ENCODE measurements at regions of chr4 and their contacts with region 1.

Region 1: GRCh38 chr4:89434364-89434988 is 126.9 kb upstream of the GPRIN3 start:
- DNase-seq: no peak

Region 2: GRCh38 chr4:89158884-89159503 is 275.5 kb before region 1 on chr4:
- intact Hi-C with region 1: loop called (anchors 2 kb)
- DNase-seq: no peak

Region 3: DNA sequence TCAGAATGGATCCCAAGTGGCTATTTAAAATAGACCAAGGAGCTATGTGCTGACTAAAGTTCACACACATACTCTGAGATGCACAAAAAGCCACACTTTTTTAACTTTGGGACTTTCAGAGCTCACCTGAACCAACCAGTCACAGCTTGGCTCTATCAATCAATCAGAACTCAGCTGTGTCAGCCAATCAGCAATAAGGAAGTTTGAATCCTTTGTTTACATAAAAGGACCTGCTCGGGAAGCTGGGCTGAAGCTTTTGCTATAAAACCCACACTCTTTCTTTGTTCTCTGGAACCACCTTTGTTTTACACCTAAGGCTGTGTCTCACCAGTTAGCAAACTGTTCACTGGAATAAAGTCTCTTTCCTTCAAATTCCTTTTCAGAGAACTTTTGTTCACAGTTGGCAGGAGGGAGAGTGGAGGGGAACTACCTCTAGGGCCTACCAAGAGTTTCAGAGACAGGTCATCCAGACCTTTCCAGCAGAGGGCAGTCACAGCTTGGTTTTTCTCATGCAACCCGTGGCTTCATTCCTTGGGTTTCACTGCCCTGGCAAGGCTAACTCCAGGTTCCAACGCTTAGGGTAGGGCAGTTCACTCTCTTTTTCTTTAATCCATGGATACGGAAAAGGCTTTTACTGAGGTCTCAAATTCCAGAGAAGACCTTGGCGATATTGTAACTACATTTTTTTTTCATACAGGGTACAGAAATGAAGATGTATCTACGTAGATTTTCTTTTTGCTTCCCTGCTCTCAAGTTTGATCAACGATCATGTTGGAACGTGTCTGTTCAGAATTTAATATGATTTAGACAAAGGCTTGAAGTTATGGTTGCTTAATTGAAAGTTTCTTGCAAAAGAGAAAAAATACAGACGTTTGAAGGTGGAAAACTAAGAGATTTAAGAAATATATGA is 207.6 kb before region 1 on chr4:
- intact Hi-C with region 1: loop called (anchors 1 kb)
- DNase-seq: peak; percentile 40 to 94 (median 79)

Region 4: DNA sequence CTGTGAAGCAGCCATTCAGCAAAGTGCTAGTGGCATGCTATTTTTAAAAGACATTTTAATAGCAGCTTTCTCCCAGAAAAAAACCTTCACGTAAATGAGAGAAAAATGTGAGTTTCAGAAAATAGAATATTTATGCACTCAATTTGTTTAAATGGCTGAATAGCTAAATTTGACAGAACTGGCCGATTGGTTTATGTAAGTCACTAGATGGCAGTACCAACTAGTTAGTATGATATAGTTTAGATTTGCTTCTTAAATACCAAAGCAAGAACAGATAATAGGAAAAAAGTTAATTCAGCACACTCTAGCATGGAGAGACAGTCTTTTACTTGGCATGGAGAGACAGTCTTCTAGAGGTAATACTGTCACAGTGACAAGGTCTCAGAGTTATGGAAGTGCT is 152.4 kb after region 1 on chr4:
- intact Hi-C with region 1: no loop called
- DNase-seq: no peak

Measured in posterior cingulate gyrus (tissue), 11 donors.